PC-9 (cell line): ENCODE measurements at regions of chr1 and their contacts with region 1.

Region 1: GRCh38 chr1:155989242-155990004 is 11.1 kb upstream of the ARHGEF2 start:
- DNase-seq: peak in 1 of 2 experiments; percentile 70
- H3K4me3 ChIP-seq: no peak overlapping the region
- H3K27ac ChIP-seq: no peak overlapping the region
- H3K4me1 ChIP-seq: peaks cover 16% of the 10 kb centered on the region
- H3K27me3 ChIP-seq: no peaks in the 10 kb centered on the region
- CTCF ChIP-seq: peak; percentile 96

Region 2: DNA sequence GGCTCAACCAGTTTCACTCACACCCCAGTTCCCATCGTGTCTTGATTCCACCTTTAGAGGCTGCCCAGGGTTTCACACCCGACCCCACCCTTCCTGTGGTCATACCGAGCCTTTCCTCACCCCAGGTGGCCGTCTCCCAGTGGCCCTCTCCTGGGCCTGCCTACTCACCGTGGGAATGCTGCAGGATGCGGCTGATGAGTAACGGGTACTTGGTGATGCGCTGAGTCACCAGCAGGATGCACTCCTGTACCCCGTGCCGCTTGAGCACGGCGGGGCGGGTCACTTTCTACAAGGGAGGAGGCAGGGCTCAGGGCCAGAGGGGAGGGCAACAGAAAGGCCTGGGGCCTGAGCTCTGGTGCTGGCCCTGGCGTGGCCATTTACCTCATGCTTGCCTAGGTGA is 27.5 kb before region 1 on chr1:
- CTCF ChIA-PET with region 1: interaction called, 4 read pairs
- POLR2A ChIA-PET with region 1: no interaction called
- intact Hi-C with region 1: loop called (anchors 1 kb)
- DNase-seq: peak; percentile 98 to 99
- H3K4me3 ChIP-seq: no peak overlapping the region
- H3K27ac ChIP-seq: peak overlapping the region; percentile 99
- H3K4me1 ChIP-seq: peaks cover 38% of the 10 kb centered on the region
- H3K27me3 ChIP-seq: no peaks in the 10 kb centered on the region
- CTCF ChIP-seq: no peak; the same call in 1 of the 2 replicates

Region 3: GRCh38 chr1:155967341-155968050 is 21.9 kb before region 1 on chr1:
- CTCF ChIA-PET with region 1: interaction called, 10 read pairs
- POLR2A ChIA-PET with region 1: no interaction called
- intact Hi-C with region 1: loop called (anchors 1 kb)
- DNase-seq: no peak
- H3K4me3 ChIP-seq: no peak overlapping the region
- H3K27ac ChIP-seq: no peak overlapping the region
- H3K4me1 ChIP-seq: peaks cover 15% of the 10 kb centered on the region
- H3K27me3 ChIP-seq: no peaks in the 10 kb centered on the region
- CTCF ChIP-seq: no peak